ENCODE measurements at regions of chr2 and their contacts with region 1.

Region 1: GRCh38 chr2:151819920-151820319 is 8.3 kb downstream of the ARL5A start:
- H3K4me3 Mint-ChIP-seq: no peak overlapping the region
- H3K27ac Mint-ChIP-seq: no peak overlapping the region
- H3K4me1 Mint-ChIP-seq: peaks cover 35% of the 10 kb centered on the region
- H3K27me3 Mint-ChIP-seq: no peaks in the 10 kb centered on the region

Region 2: GRCh38 chr2:152166633-152167032 is 346.7 kb after region 1 on chr2:
- intact Hi-C with region 1: loop called (anchors 10 kb)
- H3K4me3 Mint-ChIP-seq: no peak overlapping the region
- H3K27ac Mint-ChIP-seq: no peak overlapping the region
- H3K4me1 Mint-ChIP-seq: peaks cover 37% of the 10 kb centered on the region
- H3K27me3 Mint-ChIP-seq: no peaks in the 10 kb centered on the region